Activated T-helper 1 cell treated with anti-CD3 and anti-CD28 coated beads, Interleukin-12 subunit alpha, Interleukin-12 subunit beta, Interleukin-2, Interleukin-4 antibody, amounts not matched to agents 30 ng/mL and 10 ng/mL and 1 ng/mL, durations not matched to agents 14 hours and 24 hours and 36 hours (primary cell): ENCODE measurements at regions of chr7 and their contacts with region 1.

Region 1: DNA sequence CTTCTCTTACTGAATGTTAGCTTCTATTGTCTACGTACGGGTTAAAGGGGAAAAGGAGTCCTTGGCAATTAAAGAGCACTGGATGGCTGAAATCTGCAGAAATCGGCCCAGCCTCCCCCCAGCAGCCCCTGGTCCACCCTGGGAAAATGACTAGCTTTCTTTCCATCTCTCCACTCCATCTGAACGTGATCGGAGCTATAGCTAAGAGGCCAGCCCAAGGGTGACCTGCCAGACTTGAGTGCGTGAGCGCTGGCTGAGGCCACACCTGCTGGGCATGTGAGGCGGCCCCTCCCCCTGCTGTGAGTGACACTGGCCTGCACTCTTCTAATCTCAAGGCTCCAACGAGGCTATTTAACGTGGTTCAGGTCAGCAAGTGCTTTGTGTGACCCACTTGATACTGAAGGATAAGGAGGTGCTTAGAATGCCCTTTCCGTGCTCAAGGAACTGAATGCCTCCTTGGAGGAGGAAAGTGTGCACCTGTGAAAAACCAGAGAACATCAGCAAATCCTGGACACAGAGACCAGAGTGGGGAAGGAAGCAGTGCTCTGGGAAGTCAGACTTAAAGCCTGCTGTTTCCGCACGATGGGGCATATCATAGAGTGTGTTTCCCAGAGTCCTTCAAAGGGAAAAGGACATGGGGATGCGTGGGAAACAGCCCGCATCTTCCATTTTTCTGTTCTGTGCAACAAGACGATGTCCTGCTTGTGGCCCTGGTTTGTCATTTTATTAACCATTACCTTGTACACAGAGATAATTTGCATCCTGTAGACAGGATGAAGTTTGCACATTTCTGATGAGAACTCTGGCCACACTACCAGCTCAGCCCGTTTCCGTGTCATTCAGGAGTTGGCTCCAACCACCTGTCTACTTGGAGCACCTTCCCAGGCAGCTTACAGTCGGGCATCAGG is 12.5 kb upstream of the MNX1 start:
- DNase-seq: no peak
- H3K4me3 Mint-ChIP-seq: no peak overlapping the region
- H3K27ac Mint-ChIP-seq: no peak overlapping the region
- H3K4me1 Mint-ChIP-seq: no peaks in the 10 kb centered on the region
- H3K27me3 Mint-ChIP-seq: peaks cover 70% of the 10 kb centered on the region

Region 2: GRCh38 chr7:157010588-157011332 is 12.2 kb before region 1 on chr7 and contains the start of gene MNX1:
- intact Hi-C with region 1: loop called (anchors 1 kb)
- DNase-seq: peak; percentile 30
- H3K4me3 Mint-ChIP-seq: peak within 1 kb of the TSS; percentile 37
- H3K27ac Mint-ChIP-seq: peak within 1 kb of the TSS; percentile 51
- H3K4me1 Mint-ChIP-seq: peaks cover under 1% of the 10 kb centered on the region
- H3K27me3 Mint-ChIP-seq: peaks cover 79% of the 10 kb centered on the region
- total RNA-seq, gene MNX1: not detected in 2 replicates